ENCODE measurements at regions of chr14 and their contacts with region 1.

Region 1: GRCh38 chr14:52729925-52730667 is at the start of gene STYX:
- DNase-seq: peak; percentile 99
- ATAC-seq: peak; percentile 99 to 100 (median 99)
- H3K4me3 ChIP-seq: peak within 1 kb of the TSS; percentile 62 to 95 (median 92)
- H3K27ac ChIP-seq: peak within 1 kb of the TSS; percentile 38 to 94 (median 90)
- H3K4me1 ChIP-seq: peaks cover 0 to 18% (median 11%) of the 10 kb centered on the region in 9 donors
- H3K27me3 ChIP-seq: no peaks in the 10 kb centered on the region
- CTCF ChIP-seq: peak in 7 of 9 donors; percentile 23 to 49 (median 32)
- total RNA-seq, gene STYX: 12.9 to 15.8 (median 14.2) TPM

Region 2: GRCh38 chr14:52706724-52707706 is 23.1 kb before region 1 on chr14 and contains the start of gene PSMC6:
- intact Hi-C with region 1: loop called in 1 of 10 experiments (anchors 1 kb)
- DNase-seq: peak; percentile 96 to 97
- ATAC-seq: peak; percentile 100
- H3K4me3 ChIP-seq: peak within 1 kb of the TSS; percentile 57 to 88 (median 74)
- H3K27ac ChIP-seq: peak within 1 kb of the TSS; percentile 77 to 94 (median 90)
- H3K4me1 ChIP-seq: peaks cover 0 to 49% (median 29%) of the 10 kb centered on the region in 9 donors
- H3K27me3 ChIP-seq: no peaks in the 10 kb centered on the region
- CTCF ChIP-seq: no peak
- total RNA-seq, gene PSMC6: 78.5 to 94.0 (median 85.4) TPM

Region 3: DNA sequence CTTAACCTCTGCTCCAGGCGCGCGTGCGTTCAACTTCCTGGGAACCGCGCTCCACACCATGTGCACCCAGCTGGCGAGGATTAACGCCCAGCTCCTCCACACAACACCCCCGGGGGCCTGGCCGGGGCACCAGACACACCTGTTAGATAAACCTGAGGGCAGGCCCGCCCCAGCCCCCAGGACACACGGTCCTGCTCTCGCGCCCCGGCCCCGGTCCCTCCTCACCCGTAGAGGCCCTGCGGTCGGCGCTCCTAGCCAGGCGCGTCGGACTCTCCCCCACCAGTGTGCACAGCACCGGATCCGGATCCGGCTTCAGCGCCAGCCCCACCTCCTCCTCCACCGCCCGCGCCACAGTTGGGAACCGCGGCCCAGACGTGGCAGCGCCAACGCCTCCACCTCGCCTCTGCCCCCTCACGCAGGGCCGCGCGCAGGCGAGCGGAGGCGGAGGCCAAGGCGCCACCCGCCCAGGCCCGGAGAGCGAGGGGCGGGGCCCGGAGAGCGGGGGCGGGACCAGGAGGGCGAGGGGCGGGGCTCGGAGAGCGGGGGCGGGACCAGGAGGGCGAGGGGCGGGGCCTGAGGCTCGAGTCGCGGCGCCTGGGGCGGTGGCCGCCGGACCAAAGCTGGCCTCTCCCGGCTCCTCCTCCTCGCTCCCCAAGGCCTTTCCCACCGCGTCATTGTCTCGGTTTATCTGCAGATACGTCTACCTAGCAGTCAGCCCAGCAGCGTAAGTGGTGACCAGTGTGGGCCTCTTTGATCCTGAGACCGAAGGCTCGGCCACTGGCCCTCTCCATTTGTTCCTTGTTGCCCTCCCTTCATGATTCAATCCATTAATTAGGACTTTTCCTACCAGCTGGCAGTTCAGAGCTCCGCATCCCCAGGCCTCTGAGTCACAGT is 61.4 kb after region 1 on chr14 and contains the start of gene GNPNAT1:
- intact Hi-C with region 1: loop called in 2 of 10 experiments (anchors 10 kb)
- DNase-seq: peak; percentile 83 to 87
- ATAC-seq: peak; percentile 93 to 99 (median 95)
- H3K4me3 ChIP-seq: peak within 1 kb of the TSS; percentile 51 to 93 (median 74)
- H3K27ac ChIP-seq: peak within 1 kb of the TSS; percentile 67 to 94 (median 88)
- H3K4me1 ChIP-seq: peaks cover 0 to 30% (median 20%) of the 10 kb centered on the region in 9 donors
- H3K27me3 ChIP-seq: no peaks in the 10 kb centered on the region
- CTCF ChIP-seq: peak in 1 of 9 donors; percentile 5
- total RNA-seq, gene GNPNAT1: 4.5 to 12.7 (median 5.3) TPM